Stomach (tissue), 19 donors: ENCODE measurements at regions of chr14 and their contacts with region 1.

Region 1: GRCh38 chr14:64823305-64823861 is 56.3 kb downstream of the SPTB start:
- DNase-seq: peak; percentile 84 to 93
- H3K4me3 ChIP-seq: no peak overlapping the region
- H3K27ac ChIP-seq: no peak overlapping the region
- H3K4me1 ChIP-seq: peaks cover 0 to 9% (median 4%) of the 10 kb centered on the region in 4 donors
- H3K27me3 ChIP-seq: peaks cover 0 to 11% (median 0%) of the 10 kb centered on the region in 3 donors
- CTCF ChIP-seq: peak in 5 of 7 experiments; percentile 69 to 83 (median 77)
- EP300 ChIP-seq: no peak
- POLR2A ChIP-seq: no peak

Region 2: GRCh38 chr14:64986578-64987571 is 163.5 kb after region 1 on chr14 and contains the start of gene FNTB:
- intact Hi-C with region 1: loop called (anchors 10 kb)
- DNase-seq: peak; percentile 97 to 99
- H3K4me3 ChIP-seq: peak within 1 kb of the TSS; percentile 64 to 87 (median 80)
- H3K27ac ChIP-seq: peak within 1 kb of the TSS; percentile 84 to 93 (median 88)
- H3K4me1 ChIP-seq: peaks cover 6 to 46% (median 38%) of the 10 kb centered on the region in 4 donors
- H3K27me3 ChIP-seq: no peaks in the 10 kb centered on the region
- CTCF ChIP-seq: peak in 5 of 7 experiments; percentile 45 to 78 (median 61)
- EP300 ChIP-seq: no peak
- POLR2A ChIP-seq: peak in 2 of 4 donors; percentile 30 to 35
- total RNA-seq, gene FNTB: 2.9 to 18.3 (median 8.1) TPM in 4 of 5 donors, not detected in the other

Region 3: DNA sequence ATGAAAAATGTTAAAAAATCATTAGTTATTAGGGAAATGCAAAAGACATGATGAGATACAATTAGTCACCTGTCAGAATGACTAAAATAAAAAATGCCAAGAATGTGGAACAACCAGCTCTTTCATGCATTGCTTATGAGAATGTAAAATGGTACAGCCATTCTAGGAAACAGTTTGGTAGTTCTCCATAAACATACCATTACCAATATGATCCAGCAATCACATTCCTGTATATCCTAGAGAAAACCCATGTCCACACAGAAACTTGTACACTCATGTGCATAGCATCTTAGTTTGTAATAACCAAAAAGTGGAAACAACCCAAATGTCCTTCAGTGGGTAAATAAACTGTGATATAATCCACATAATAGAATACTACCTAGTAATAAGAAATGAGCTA is 834.8 kb after region 1 on chr14:
- intact Hi-C with region 1: no loop called
- DNase-seq: no peak
- H3K4me3 ChIP-seq: no peak overlapping the region
- H3K27ac ChIP-seq: no peak overlapping the region
- H3K4me1 ChIP-seq: peaks cover 0 to 46% (median 19%) of the 10 kb centered on the region in 4 donors
- H3K27me3 ChIP-seq: no peaks in the 10 kb centered on the region
- CTCF ChIP-seq: no peak
- EP300 ChIP-seq: no peak
- POLR2A ChIP-seq: no peak